ENCODE measurements at regions of chr3 and their contacts with region 1.

Region 1: DNA sequence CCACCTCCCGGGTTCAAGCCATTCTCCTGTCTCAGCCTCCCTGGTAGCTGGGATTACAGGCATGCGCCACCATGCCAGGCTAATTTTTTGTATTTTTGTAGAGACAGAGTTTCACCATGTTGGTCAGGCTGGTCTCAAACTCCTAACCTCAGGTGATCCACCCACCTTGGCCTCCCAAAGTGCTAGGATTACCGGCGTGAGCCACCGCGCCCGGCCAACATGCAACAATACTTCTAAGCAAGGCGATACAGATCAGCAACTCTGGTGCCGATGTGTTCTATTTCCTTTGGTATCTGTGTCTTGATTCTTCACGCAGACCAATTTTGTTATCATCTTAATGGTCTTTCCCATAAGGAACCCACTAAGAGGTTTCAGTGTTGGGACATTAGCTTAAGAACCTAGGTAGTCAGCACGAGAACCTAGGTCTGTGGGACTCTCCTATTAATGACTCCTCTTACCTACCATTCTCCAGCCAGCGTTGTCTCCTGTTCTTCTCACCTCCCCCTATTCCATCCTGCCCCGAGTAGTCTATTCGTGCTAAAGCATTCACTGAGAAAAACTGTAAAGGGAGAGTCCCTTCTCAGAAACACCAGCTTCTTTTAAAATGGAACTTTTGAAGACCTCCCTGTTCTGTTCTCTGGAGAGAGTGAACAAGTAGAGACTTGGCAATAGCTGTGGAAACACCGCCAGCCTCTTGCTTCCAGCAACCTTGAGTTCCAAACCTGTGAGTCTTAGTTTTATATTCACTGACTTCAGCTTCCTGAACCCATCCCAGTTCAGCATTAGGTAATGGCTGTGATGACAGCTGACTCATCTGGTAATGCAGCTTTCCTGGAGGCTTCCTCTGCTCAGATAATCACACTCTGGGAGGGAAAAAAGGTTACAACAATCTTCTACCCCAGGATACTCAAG is 61.2 kb downstream of the TSC22D2 start:
- DNase-seq: peak in 1 of 2 donors; percentile 69
- H3K4me3 ChIP-seq: no peak overlapping the region
- H3K27ac ChIP-seq: peak overlapping the region; percentile 78 to 82
- H3K4me1 ChIP-seq: peaks cover 0 to 2% of the 10 kb centered on the region in 2 donors
- H3K27me3 ChIP-seq: no peaks in the 10 kb centered on the region
- CTCF ChIP-seq: no peak
- POLR2A ChIP-seq: no peak

Region 2: DNA sequence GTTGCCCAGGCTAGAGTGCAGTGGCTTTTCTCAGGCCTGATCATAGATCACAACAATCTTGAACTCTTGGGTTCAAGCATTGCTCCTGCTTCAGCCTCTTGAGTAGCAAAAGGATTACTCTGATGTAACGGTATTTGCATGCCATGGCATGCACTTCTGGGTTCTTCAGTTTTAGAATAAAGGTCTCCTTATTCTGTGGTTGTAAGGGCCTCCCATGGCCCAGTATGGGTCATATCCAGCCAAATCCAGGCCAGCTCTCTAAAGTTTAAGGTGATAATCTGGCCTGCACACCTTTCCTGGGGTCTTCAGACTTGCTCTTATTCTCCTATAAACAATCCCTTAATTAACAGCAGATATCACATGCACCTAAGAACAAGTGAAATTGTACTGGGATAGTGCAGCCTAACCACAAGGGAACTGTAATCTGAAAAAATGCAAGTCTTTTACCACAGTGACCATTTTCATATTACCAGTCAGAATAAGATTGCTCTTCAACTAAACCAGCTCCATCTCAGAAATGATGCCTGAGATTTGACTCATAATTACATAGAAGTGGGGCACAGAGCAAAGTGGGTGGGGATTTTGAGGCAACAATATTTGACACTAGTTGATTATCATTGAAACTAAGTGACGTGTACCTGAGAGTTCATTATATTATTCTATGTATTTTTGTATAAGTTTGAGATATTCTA is 742.4 kb before region 1 on chr3:
- intact Hi-C with region 1: no loop called
- DNase-seq: no peak
- H3K4me3 ChIP-seq: no peak overlapping the region
- H3K27ac ChIP-seq: no peak overlapping the region
- H3K4me1 ChIP-seq: no peaks in the 10 kb centered on the region
- H3K27me3 ChIP-seq: no peaks in the 10 kb centered on the region
- CTCF ChIP-seq: no peak
- POLR2A ChIP-seq: no peak

Region 3: DNA sequence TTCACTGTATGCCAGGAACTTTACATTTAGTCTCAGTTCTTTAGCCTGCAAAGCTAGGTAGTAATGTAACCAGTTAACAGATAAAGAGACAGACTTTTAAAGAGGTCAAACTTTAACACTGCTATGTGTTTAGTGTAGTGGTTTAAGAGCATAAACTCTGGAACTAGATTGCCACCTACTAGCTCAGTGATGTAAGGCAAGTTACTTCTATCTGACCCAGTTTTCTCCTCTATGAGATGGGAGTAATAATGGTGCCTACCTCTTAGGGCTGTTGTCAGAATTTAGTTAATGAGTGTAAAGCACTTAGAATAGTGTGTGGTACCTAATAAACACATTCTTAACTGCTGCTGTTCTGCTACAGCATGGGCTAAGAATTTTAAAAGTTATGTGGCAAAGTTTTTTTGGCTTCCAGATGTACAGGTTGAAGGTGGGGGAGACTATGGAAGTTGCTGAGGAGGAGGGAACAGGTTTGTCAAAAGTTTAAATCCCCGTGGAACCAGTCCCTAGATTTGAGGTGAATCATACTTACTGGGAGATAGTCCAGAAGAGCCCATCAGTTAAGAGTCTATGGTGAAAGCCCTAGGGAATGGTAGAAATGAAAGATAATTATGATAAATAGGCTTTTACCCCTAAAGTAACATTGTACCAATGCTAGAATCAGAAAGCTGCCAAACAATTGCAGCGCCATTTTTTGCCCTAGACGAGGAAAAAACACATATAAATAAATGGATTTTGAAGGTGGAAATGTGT is 47.3 kb before region 1 on chr3:
- intact Hi-C with region 1: loop called (anchors 2 kb)
- DNase-seq: no peak
- H3K4me3 ChIP-seq: no peak overlapping the region
- H3K27ac ChIP-seq: peak overlapping the region in 1 of 2 donors; percentile 8
- H3K4me1 ChIP-seq: no peaks in the 10 kb centered on the region
- H3K27me3 ChIP-seq: no peaks in the 10 kb centered on the region
- CTCF ChIP-seq: no peak
- POLR2A ChIP-seq: no peak

Measured in breast epithelium (tissue), 4 donors.